Activated naive CD4-positive, alpha-beta T cell treated with anti-CD3 and anti-CD28 coated beads, Interleukin-2, amount 10 ng/mL, durations not matched to agents 7 days and 5 days (primary cell): ENCODE measurements at regions of chr6 and their contacts with region 1.

Region 1: DNA sequence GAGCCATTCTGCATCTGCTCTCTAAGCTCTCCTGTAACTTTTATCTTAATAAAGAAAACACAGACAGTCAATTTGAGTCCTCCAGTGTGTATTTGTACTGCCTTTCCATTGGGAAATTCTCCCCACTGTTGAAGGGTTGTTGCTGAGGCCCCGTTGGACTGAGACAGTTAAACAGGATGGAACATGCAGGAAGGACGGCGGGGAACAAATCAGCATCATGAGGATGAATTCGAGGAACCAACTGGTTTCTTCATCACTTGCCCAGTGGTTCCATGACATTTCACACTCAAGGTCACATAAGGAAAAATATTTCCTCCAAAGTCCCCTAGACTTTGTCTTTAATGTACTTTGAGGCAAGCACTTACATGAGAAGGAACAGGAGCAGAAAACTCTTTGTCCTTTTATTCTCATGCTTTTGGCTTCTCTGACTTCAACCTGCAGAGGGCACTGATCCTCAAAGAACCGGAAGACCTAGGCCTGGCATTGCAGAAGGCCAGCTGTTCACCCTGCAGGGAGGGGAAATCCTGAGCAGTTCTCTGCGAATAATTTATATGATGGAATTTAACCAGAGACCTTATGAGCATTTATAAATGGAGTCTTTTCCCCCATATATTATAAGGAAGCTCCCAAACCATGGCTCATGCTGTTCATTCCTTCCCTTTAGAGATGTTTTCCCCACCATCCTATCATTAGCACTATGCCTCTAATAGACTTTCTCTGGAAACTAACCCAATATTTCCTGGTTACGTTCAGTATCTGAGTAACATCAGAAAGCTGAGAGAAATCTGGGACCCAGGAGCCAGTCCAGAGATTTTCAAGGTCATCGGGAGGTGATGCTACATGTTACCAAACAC is 55.2 kb upstream of the ADGRF1 start:
- DNase-seq: peak; percentile 61
- H3K4me3 Mint-ChIP-seq: no peak overlapping the region
- H3K27ac Mint-ChIP-seq: no peak overlapping the region
- H3K4me1 Mint-ChIP-seq: no peaks in the 10 kb centered on the region
- H3K27me3 Mint-ChIP-seq: peaks cover 7% of the 10 kb centered on the region

Region 2: GRCh38 chr6:46983007-46983411 is 114.3 kb before region 1 on chr6:
- CTCF ChIA-PET with region 1: no interaction called
- DNase-seq: no peak
- H3K4me3 Mint-ChIP-seq: no peak overlapping the region
- H3K27ac Mint-ChIP-seq: no peak overlapping the region
- H3K4me1 Mint-ChIP-seq: no peaks in the 10 kb centered on the region
- H3K27me3 Mint-ChIP-seq: no peaks in the 10 kb centered on the region

Region 3: GRCh38 chr6:47252633-47253032 is 155.3 kb after region 1 on chr6:
- CTCF ChIA-PET with region 1: interaction called, 12 read pairs
- DNase-seq: no peak
- H3K4me3 Mint-ChIP-seq: no peak overlapping the region
- H3K27ac Mint-ChIP-seq: no peak overlapping the region
- H3K4me1 Mint-ChIP-seq: no peaks in the 10 kb centered on the region
- H3K27me3 Mint-ChIP-seq: peaks cover 3% of the 10 kb centered on the region

Region 4: DNA sequence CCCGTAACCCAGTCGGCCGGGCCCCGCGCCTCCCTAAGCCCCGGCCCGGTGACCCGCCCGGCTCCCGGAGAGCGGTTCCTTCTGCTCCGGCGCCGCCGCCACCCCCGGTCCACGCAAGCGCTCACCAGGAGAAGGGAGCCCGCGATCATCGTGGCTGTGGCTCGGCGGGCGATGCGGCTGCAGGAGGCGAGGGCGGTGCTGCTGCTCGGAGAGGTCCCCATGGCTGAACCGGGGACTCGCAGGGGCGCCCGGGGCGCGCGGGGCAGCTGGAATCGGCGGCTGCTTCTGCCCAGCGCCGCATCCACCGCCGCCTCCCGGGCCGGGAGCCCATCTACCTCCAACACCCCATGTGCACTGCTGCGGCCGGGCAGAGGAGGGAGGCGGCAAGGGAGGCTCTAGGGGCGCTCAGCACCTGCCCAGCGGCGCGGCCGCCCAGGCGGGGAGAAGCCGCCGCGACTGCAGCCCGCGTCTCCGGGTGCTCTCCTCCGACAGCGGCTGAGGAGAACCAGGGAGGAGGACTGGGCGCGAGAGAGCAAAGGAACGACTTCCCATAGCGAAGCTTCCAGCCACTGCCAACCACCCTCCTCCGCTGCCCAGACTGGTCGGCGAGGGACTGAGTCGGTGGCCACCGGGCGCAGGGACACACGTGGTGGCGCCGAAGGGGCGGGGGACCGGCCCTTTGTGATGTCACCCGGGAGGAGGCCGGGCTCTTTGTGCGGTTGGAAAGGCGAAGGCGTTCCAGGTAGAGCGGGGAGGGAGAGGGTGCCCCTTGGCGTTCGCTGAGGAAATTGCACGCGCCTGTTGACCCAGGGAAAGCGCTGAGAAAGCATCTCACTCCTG is 212.2 kb after region 1 on chr6 and contains the start of gene TNFRSF21:
- CTCF ChIA-PET with region 1: interaction called, 57 read pairs
- DNase-seq: peak; percentile 87
- H3K4me3 Mint-ChIP-seq: peak within 1 kb of the TSS; percentile 67
- H3K27ac Mint-ChIP-seq: no peak within 1 kb of the TSS
- H3K4me1 Mint-ChIP-seq: peaks cover 11% of the 10 kb centered on the region
- H3K27me3 Mint-ChIP-seq: peaks cover 53% of the 10 kb centered on the region